ENCODE measurements at regions of chr20 and their contacts with region 1.

Region 1: DNA sequence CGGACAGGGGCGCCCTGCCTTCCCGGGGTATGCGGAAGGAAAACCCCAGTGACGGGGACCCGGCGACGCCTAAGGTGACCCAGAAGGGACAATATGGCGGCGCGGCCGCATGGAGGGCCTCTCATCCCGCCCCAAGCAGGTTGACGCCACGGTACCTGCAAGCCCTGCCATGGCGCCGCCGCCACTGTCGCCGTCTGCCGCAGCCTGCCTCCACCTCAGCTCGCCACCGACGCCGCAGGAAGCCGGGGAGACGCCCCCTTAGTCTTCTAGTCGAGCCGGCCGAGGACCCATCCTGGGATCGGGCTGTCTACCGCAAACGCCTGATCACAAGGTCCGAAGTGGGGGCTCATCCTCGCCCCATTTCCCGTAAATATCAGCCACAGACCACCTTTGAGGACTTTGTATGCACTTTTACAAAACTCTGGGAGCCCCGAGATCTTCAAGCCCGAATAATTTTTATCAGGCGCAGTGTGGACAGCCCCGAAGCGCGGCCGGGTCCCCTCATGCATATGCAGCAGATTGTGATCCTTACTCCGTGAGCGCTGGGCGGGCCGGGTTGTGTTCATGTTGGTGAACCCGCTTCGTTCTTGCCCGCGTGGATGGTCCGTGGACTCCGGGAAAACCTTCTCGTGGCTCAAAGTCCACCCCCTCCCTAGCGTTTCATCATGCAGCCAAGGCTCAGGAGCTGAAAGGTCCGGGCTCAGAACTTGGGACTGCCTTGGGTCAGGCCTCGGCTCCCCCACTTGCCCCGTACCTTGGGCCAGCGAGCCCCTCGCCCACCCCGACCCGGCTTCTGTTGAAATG is at the start of gene BLCAP:
- DNase-seq: peak; percentile 93 to 97 (median 95)
- ATAC-seq: peak; percentile 92 to 94
- H3K4me3 ChIP-seq: peak within 1 kb of the TSS; percentile 84
- H3K27ac ChIP-seq: peak within 1 kb of the TSS; percentile 94
- H3K4me1 ChIP-seq: peaks cover 24% of the 10 kb centered on the region
- H3K27me3 ChIP-seq: no peaks in the 10 kb centered on the region
- total RNA-seq, gene BLCAP: 87.4 to 103 (median 93.3) TPM

Region 2: DNA sequence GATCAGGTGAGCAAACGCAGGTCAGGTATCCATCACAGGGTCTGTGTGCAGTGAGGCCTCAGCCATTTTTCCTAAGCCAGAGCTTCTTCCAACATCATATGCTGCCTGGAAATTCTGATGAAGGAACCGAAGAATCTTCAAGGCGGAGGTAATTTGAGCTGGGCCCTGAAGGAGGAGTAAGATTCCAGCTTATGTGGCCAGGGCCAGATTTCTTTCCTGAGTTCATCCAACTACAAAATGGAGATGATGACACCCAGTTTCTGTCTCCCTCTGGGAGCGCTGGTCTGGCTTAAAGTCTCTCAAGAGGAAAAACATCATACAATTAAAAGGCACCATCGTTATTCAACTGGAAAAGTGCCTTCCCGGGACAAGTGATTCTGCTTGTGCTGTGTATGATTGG is 245.3 kb before region 1 on chr20:
- intact Hi-C with region 1: loop called in 1 of 4 experiments (anchors 5 kb)
- DNase-seq: no peak
- ATAC-seq: peak in 1 of 2 donors; percentile 29
- H3K4me3 ChIP-seq: no peak overlapping the region
- H3K27ac ChIP-seq: no peak overlapping the region
- H3K4me1 ChIP-seq: no peaks in the 10 kb centered on the region
- H3K27me3 ChIP-seq: no peaks in the 10 kb centered on the region

Region 3: GRCh38 chr20:37697314-37697713 is 169.5 kb after region 1 on chr20:
- intact Hi-C with region 1: no loop called
- DNase-seq: no peak
- ATAC-seq: no peak
- H3K4me3 ChIP-seq: no peak overlapping the region
- H3K27ac ChIP-seq: no peak overlapping the region
- H3K4me1 ChIP-seq: peaks cover 4% of the 10 kb centered on the region
- H3K27me3 ChIP-seq: no peaks in the 10 kb centered on the region

Measured in right cardiac atrium (tissue), 5 donors.